HEK293 (cell line): ENCODE measurements at regions of chr1 and their contacts with region 1.

Region 1: DNA sequence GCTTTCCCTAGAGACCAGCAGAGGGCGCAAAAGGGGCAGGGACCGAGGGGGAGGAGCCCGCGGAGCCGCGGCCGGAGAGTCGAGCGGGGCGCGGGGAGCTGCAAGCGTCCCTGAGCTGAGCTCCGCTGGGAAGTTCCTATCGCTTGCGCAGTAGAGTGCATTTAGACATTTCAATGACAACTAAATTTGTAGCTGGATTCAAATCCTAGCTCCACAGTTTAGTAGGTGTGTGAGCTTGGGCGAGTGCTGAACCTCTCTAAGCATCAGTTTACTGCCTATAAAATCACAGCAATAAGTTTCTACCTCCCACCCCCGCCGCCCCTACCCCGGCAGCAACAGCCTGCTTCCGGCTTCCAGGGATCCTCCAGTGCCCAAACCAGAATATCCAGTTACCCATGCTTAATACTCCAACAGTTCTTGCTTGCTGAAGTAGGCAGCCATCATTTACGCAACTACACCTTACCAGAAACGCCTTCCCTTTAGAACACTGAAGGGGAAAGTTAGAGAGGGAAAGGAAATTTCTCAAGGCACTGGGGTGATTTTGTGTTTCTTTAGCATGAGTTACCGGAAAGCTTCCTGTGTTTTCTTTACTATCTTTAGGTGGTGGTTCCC is 9.1 kb downstream of the TLR5 start:
- H3K4me3 ChIP-seq: peak overlapping the region; percentile 38
- H3K27ac ChIP-seq: no peak overlapping the region
- H3K4me1 ChIP-seq: peaks cover 3% of the 10 kb centered on the region; the same call in 1 of the 2 replicates
- CTCF ChIP-seq: peak; percentile 99

Region 2: DNA sequence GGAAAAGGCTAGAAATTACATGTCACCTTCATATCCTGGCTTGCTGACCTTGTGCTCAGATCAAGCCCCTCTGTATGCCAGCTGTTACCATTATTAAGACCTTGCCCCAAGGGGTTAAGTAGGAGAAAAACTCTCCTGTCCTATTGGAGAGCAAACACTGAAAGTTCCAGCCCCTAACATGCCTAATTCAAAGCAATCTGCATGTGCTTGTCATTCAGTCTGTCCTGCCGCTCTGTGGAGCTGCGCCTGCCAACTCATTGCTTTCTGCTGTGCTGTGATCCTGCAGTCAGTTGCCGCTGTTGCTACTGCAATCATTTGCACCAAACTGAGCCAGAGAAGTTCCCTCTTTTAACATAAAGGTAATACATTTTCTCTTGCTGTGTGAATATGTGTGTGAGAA is 205.7 kb before region 1 on chr1:
- CTCF ChIA-PET with region 1: no interaction called
- POLR2A ChIA-PET with region 1: no interaction called
- H3K4me3 ChIP-seq: no peak overlapping the region
- H3K27ac ChIP-seq: no peak overlapping the region
- H3K4me1 ChIP-seq: peaks cover 25% of the 10 kb centered on the region; the same call in 1 of the 2 replicates
- CTCF ChIP-seq: no peak

Region 3: GRCh38 chr1:223087291-223088255 is 46.4 kb before region 1 on chr1:
- CTCF ChIA-PET with region 1: interaction called, 239 read pairs
- POLR2A ChIA-PET with region 1: no interaction called
- H3K4me3 ChIP-seq: no peak overlapping the region
- H3K27ac ChIP-seq: no peak overlapping the region
- H3K4me1 ChIP-seq: no peaks in the 10 kb centered on the region
- CTCF ChIP-seq: no peak

Region 4: DNA sequence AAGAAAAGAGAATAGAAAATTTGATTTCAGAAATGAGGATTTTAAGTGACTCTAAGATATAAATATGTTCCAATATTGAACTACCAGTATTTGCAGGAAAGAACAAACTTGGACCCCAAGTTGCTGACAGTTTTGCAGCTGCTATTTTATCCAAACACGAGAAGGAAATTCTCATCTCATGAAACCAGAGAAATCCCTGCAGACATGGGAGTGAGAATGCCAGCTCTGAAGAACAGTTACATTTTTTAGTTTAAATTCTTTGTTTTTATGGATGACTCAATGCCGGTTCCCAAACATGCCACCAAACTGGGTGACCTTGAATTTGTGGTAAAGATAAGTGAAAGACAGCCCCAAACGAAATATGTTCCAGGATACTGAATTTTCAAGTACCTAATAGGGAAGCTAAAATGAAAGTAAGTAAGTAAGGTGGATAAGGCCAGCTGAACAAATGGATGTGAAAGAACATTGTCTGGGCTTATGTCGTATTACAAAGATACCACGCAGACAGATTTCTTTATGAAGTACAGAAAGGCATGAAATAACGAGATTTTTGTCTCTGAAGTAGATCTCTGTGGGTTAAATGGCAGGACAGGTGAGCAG is 10.8 kb before region 1 on chr1:
- CTCF ChIA-PET with region 1: interaction called, 147 read pairs
- POLR2A ChIA-PET with region 1: interaction called, 8 read pairs
- H3K4me3 ChIP-seq: no peak overlapping the region
- H3K27ac ChIP-seq: no peak overlapping the region
- H3K4me1 ChIP-seq: no peaks in the 10 kb centered on the region
- CTCF ChIP-seq: no peak

Region 5: GRCh38 chr1:223244366-223245103 is 110.6 kb after region 1 on chr1:
- CTCF ChIA-PET with region 1: interaction called, 10 read pairs
- POLR2A ChIA-PET with region 1: no interaction called
- H3K4me3 ChIP-seq: no peak overlapping the region
- H3K27ac ChIP-seq: no peak overlapping the region
- H3K4me1 ChIP-seq: peaks cover 3% of the 10 kb centered on the region; the same call in 1 of the 2 replicates
- CTCF ChIP-seq: 0 out of 2 replicates have a peak, but pooled peaks have one; percentile 7

Region 6: DNA sequence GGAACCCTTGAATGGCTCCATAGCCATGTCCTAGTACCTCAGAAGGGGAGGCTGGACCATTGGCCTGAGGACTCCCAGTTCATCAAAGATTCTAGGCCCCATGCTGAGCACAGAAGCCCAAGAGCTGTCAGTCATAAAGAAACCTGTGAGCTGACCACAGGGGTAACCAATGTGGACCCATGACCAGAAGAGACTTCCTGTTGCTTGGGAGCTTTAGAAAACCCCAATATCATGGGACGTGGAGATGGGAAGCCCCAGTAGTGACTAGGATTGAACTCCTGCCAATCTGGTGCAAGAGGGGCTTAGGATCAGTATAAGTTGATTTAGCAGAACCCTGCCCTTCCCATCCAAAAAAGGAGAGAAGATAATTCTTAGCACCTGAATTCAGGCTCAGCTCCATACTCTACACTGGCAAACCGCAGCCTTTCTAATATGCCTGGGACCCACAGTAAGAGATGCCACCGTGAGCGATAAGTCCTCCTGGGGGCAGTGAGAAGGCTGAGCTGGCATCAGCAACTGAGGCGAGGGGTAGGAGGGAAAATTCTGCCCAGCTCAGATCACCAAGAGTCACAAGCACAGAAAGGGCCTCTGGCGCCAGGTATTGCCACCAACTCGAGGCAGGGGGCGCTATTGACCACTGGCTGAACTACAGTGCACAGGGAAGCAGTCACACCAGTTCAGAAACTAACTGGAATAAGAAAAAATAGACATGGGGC is 422.6 kb after region 1 on chr1:
- CTCF ChIA-PET with region 1: interaction called, 10 read pairs
- POLR2A ChIA-PET with region 1: no interaction called
- H3K4me3 ChIP-seq: no peak overlapping the region
- H3K27ac ChIP-seq: no peak overlapping the region
- H3K4me1 ChIP-seq: no peaks in the 10 kb centered on the region
- CTCF ChIP-seq: no peak

Region 7: DNA sequence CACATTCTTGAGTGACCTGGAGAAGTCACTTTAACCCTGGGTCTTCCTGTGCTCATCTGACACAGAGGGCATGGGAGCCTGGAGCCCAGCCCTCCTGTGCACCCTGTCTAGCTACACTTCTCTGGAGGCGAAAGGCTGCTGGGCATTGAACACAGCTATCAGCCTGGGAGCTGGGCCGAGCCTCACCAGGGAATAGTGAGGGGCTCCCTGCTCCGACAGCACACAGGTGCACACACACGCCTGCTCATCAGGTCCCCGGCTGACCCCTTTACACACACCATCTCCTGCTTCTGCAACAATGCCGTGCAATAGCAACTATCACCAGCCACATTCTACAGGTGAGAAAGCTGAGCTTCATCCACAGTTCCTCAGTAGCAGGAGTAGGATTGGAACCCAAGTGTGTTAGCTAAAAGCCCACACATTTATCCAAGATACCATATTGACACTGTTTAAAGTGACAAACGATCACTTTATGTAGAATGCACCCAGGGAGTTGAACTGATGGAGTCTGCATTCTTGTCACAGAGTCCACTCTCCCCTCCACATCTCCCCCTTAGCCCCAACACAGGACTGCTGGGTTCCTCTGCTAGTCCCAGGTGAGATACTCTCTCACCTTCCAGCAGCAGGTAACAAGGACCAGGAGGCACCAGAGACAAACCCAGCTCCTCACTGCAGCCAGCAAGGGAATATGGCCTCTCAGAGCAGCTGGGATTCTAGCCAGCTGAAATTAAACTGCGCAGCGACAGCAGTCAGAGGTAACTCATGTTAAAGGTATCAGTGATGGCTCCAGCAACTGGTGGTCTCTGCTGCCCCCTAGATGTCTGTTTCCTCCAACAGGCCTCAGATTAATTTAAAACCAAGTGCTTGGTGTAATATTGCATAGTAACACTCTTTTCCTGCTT is 549.9 kb after region 1 on chr1:
- CTCF ChIA-PET with region 1: interaction called, 233 read pairs
- POLR2A ChIA-PET with region 1: interaction called, 3 read pairs
- H3K4me3 ChIP-seq: no peak overlapping the region
- H3K27ac ChIP-seq: no peak overlapping the region
- H3K4me1 ChIP-seq: no peaks in the 10 kb centered on the region
- CTCF ChIP-seq: peak; percentile 95